Naive thymus-derived CD4-positive, alpha-beta T cell (primary cell): ENCODE measurements at regions of chr19 and their contacts with region 1.

Region 1: GRCh38 chr19:12789904-12790619 is 1.2 kb upstream of the JUNB start:
- DNase-seq: peak; percentile 80 to 97 (median 83)
- ATAC-seq: peak; percentile 48
- H3K4me3 ChIP-seq: peak overlapping the region; percentile 98
- H3K4me3 Mint-ChIP-seq: peak overlapping the region; percentile 89 to 98 (median 94)
- H3K27ac ChIP-seq: peak overlapping the region; percentile 99
- H3K27ac Mint-ChIP-seq: peak overlapping the region; percentile 97 to 100 (median 100)
- H3K4me1 ChIP-seq: peaks cover 42% of the 10 kb centered on the region in 2 donors
- H3K4me1 Mint-ChIP-seq: peaks cover 19 to 37% (median 30%) of the 10 kb centered on the region in 7 donors
- H3K27me3 ChIP-seq: no peaks in the 10 kb centered on the region
- H3K27me3 Mint-ChIP-seq: peaks cover 0 to 2% (median 0%) of the 10 kb centered on the region in 5 donors

Region 2: DNA sequence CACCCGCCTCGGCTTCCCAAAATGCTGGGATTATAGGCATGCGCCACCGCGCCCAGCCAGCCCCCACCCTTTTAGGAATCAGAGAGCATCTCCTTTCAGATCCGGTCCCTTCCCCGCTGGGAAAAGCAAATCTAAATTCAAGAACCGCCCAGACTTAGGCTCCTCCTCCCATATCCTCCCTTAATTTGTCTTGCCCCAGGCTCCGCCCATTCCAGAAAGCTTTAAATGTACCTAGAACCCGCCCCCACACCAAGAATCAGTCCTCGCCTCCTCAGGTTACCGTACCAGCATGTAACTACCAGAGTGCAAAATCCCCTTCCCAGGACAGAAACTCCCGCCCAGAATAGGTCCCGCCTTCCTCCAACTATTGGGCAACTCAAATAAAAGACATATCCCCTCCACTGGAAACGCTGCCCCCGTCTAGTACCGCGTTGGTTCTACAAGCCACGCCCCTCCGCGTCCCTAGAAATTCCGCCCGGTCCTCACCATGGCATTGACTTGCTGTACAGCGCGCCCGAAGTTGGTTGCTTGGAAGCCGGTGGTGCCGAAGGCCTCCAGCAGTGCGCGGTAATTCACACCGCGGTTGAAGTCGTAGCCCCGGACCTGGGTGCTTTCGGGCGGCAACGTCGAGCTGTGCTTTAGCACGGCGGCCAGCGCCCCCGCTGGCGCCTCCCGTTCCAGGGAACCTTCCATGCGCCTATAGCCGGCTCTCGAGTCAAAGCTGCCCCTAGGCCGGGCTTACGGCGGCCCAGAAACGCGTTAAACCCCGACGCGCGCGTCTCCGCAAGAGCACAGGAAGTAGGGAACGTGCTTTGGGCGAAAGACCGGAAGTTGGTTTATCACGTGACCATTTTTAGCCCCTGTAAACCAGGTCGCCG is 108.7 kb before region 1 on chr19 and contains the start of gene DHPS:
- CTCF ChIA-PET with region 1: interaction called, 4 read pairs
- POLR2A ChIA-PET with region 1: interaction called, 6 read pairs
- intact Hi-C with region 1: loop called in 1 of 2 experiments (anchors 2 kb)
- DNase-seq: peak; percentile 58 to 95 (median 93)
- ATAC-seq: peak; percentile 85
- H3K4me3 ChIP-seq: peak within 1 kb of the TSS; percentile 100
- H3K4me3 Mint-ChIP-seq: peak within 1 kb of the TSS; percentile 92 to 99 (median 96)
- H3K27ac ChIP-seq: peak within 1 kb of the TSS; percentile 95
- H3K27ac Mint-ChIP-seq: peak within 1 kb of the TSS; percentile 86 to 98 (median 94)
- H3K4me1 ChIP-seq: peaks cover 6 to 19% of the 10 kb centered on the region in 2 donors
- H3K4me1 Mint-ChIP-seq: peaks cover 18 to 34% (median 26%) of the 10 kb centered on the region in 7 donors
- H3K27me3 ChIP-seq: no peaks in the 10 kb centered on the region
- H3K27me3 Mint-ChIP-seq: no peaks in the 10 kb centered on the region
- total RNA-seq, gene DHPS: 125 to 223 (median 174) TPM

Region 3: GRCh38 chr19:12736995-12737834 is 52.8 kb before region 1 on chr19 and contains the start of gene GET3:
- CTCF ChIA-PET with region 1: no interaction called
- POLR2A ChIA-PET with region 1: interaction called, 23 read pairs
- intact Hi-C with region 1: loop called in 1 of 2 experiments (anchors 1 kb)
- DNase-seq: peak; percentile 53 to 92 (median 86)
- ATAC-seq: peak; percentile 85
- H3K4me3 ChIP-seq: peak within 1 kb of the TSS; percentile 76
- H3K4me3 Mint-ChIP-seq: peak within 1 kb of the TSS; percentile 96 to 100 (median 99)
- H3K27ac ChIP-seq: peak within 1 kb of the TSS; percentile 93
- H3K27ac Mint-ChIP-seq: peak within 1 kb of the TSS; percentile 90 to 99 (median 97)
- H3K4me1 ChIP-seq: peaks cover 27 to 30% of the 10 kb centered on the region in 2 donors
- H3K4me1 Mint-ChIP-seq: peaks cover 29 to 42% (median 38%) of the 10 kb centered on the region in 7 donors
- H3K27me3 ChIP-seq: no peaks in the 10 kb centered on the region
- H3K27me3 Mint-ChIP-seq: no peaks in the 10 kb centered on the region
- total RNA-seq, gene GET3: 22.6 to 60.3 (median 27.0) TPM

Region 4: DNA sequence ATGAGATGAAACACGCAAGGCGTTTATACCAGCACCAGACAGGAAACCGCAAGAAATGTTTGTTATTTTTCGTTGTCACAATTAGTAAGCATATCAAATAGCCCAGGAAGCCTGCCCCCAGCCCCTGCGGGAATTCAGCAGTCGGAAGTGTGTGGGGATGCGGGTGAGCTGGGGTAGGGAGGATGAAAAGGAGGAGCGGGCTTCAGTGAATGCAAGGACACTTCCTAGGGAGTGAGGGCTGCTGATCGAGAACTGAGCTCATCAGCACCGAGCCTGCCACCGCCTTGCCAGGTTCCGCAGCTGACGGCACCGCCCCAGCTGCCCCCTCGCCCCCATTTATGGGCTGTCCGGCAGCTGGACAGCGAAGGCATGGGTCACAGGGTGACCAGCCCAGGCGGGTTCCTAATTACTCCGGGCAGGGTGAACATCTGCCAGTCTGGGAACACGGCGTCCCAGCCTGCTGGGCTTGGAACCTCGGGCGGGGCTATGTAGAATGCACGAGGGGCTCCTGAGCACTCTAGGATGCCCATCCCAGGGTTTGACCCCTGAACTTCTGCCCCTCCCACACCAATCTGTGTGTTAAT is 40.0 kb before region 1 on chr19:
- CTCF ChIA-PET with region 1: no interaction called
- POLR2A ChIA-PET with region 1: no interaction called
- intact Hi-C with region 1: no loop called
- DNase-seq: no peak
- ATAC-seq: no peak
- H3K4me3 ChIP-seq: no peak overlapping the region
- H3K4me3 Mint-ChIP-seq: peak overlapping the region in 3 of 10 donors; percentile 2 to 48 (median 21)
- H3K27ac ChIP-seq: no peak overlapping the region
- H3K27ac Mint-ChIP-seq: no peak overlapping the region
- H3K4me1 ChIP-seq: no peaks in the 10 kb centered on the region
- H3K4me1 Mint-ChIP-seq: peaks cover 0 to 13% (median 4%) of the 10 kb centered on the region in 7 donors
- H3K27me3 ChIP-seq: no peaks in the 10 kb centered on the region
- H3K27me3 Mint-ChIP-seq: peaks cover 10 to 32% (median 21%) of the 10 kb centered on the region in 5 donors

Region 5: GRCh38 chr19:12806239-12807081 is 16.4 kb after region 1 on chr19 and contains the start of gene RNASEH2A:
- CTCF ChIA-PET with region 1: no interaction called
- POLR2A ChIA-PET with region 1: interaction called, 27 read pairs
- intact Hi-C with region 1: loop called in 1 of 2 experiments (anchors 2 kb)
- DNase-seq: peak; percentile 74 to 87 (median 84)
- ATAC-seq: peak; percentile 95
- H3K4me3 ChIP-seq: peak within 1 kb of the TSS; percentile 73
- H3K4me3 Mint-ChIP-seq: peak within 1 kb of the TSS; percentile 81 to 96 (median 91)
- H3K27ac ChIP-seq: peak within 1 kb of the TSS; percentile 70
- H3K27ac Mint-ChIP-seq: peak within 1 kb of the TSS; percentile 71 to 94 (median 89)
- H3K4me1 ChIP-seq: peaks cover 18% of the 10 kb centered on the region in 2 donors
- H3K4me1 Mint-ChIP-seq: peaks cover 15 to 26% (median 21%) of the 10 kb centered on the region in 7 donors
- H3K27me3 ChIP-seq: no peaks in the 10 kb centered on the region
- H3K27me3 Mint-ChIP-seq: peaks cover 0 to 6% (median 0%) of the 10 kb centered on the region in 5 donors
- total RNA-seq, gene RNASEH2A: 1.6 to 30.9 (median 9.3) TPM

Region 6: DNA sequence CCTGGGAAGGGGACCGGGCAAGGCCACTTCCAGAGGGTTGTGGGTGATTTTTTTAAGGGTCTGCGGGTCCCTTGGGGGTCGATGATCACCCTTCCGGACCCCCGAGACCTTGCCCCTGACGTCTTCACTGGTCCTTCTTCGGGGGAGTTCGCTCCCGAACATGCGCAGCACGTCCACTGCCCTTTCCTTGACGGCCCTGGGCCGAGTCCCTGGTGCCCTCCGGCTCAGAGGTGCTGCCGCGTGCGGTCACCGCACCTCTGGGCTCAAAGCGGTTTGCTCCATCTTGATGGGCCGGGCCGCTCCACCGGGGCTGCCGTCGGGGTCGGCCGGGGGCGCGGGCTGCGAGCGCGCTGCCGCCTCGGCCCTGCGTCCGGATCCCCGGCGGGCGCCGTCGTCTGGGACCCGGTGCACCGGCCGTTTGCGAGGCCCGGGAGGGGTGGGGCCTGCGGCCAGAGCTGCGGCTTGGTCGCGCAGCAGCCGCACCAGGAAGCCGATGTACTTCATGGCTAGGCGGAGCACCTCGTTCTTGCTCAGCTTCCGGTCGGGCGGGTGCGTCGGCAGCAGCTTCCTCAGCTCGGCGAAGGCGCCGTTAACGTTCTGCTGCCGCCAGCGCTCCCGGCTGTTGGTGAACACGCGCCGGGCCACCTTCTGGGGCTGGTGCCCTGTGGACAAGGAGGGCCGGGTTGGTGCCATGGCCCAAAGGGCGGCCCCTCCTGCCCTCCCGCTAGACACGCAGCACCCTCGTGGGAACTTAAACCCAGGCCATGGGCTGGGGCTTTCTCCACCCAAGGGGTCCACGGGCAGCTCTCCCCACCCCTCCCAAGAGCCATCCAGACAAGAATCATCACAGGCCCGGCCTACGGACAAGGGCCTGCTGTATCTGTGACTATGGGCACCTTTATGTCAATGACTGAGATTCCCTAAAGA is 309.3 kb after region 1 on chr19:
- CTCF ChIA-PET with region 1: no interaction called
- POLR2A ChIA-PET with region 1: interaction called, 5 read pairs
- intact Hi-C with region 1: loop called in 1 of 2 experiments (anchors 5 kb)
- DNase-seq: peak; percentile 67 to 85 (median 81)
- ATAC-seq: peak; percentile 66
- H3K4me3 ChIP-seq: peak overlapping the region; percentile 74
- H3K4me3 Mint-ChIP-seq: peak overlapping the region; percentile 80 to 90 (median 86)
- H3K27ac ChIP-seq: peak overlapping the region; percentile 82
- H3K27ac Mint-ChIP-seq: peak overlapping the region; percentile 88 to 99 (median 93)
- H3K4me1 ChIP-seq: peaks cover 70 to 71% of the 10 kb centered on the region in 2 donors
- H3K4me1 Mint-ChIP-seq: peaks cover 17 to 64% (median 53%) of the 10 kb centered on the region in 7 donors
- H3K27me3 ChIP-seq: peaks cover 0 to 6% of the 10 kb centered on the region in 2 donors
- H3K27me3 Mint-ChIP-seq: peaks cover 6 to 35% (median 16%) of the 10 kb centered on the region in 5 donors

Region 7: GRCh38 chr19:13277104-13277809 is 487.2 kb after region 1 on chr19:
- CTCF ChIA-PET with region 1: no interaction called
- POLR2A ChIA-PET with region 1: no interaction called
- intact Hi-C with region 1: no loop called
- DNase-seq: peak; percentile 23 to 84 (median 79)
- ATAC-seq: peak; percentile 93
- H3K4me3 ChIP-seq: peak overlapping the region; percentile 41
- H3K4me3 Mint-ChIP-seq: peak overlapping the region; percentile 39 to 75 (median 64)
- H3K27ac ChIP-seq: peak overlapping the region; percentile 60
- H3K27ac Mint-ChIP-seq: peak overlapping the region; percentile 47 to 91 (median 84)
- H3K4me1 ChIP-seq: peaks cover 7% of the 10 kb centered on the region in 2 donors
- H3K4me1 Mint-ChIP-seq: peaks cover 8 to 33% (median 18%) of the 10 kb centered on the region in 7 donors
- H3K27me3 ChIP-seq: no peaks in the 10 kb centered on the region
- H3K27me3 Mint-ChIP-seq: peaks cover 0 to 10% (median 5%) of the 10 kb centered on the region in 5 donors

Region 8: DNA sequence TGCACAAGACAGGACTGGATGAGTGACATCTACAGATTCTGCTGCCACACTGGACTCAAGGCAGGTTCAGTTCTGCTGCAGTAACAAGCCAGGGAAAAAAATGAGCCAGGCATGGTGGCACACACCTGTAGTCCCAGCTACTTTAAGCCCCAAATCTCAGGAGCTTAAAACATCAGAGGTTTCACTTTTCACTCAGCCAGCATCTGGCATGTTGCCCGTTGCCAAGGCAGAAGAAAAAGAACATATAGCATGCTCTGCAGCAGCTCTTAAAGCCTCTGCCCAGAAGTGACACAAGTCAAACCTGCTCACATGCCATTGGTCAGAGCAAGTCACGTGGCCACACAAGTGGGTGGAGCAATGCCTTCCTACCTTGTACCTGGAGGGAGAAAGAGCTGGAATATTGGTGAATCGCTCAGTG is 1576.4 kb after region 1 on chr19:
- CTCF ChIA-PET with region 1: no interaction called
- POLR2A ChIA-PET with region 1: interaction called, 4 read pairs
- intact Hi-C with region 1: loop called in 1 of 2 experiments (anchors 5 kb)
- DNase-seq: peak; percentile 76 to 96 (median 93)
- ATAC-seq: peak; percentile 68
- H3K4me3 ChIP-seq: peak overlapping the region; percentile 44
- H3K4me3 Mint-ChIP-seq: peak overlapping the region; percentile 54 to 90 (median 78)
- H3K27ac ChIP-seq: peak overlapping the region; percentile 99
- H3K27ac Mint-ChIP-seq: peak overlapping the region; percentile 93 to 100 (median 98)
- H3K4me1 ChIP-seq: peaks cover 55 to 80% of the 10 kb centered on the region in 2 donors
- H3K4me1 Mint-ChIP-seq: peaks cover 53 to 81% (median 65%) of the 10 kb centered on the region in 7 donors
- H3K27me3 ChIP-seq: no peaks in the 10 kb centered on the region
- H3K27me3 Mint-ChIP-seq: no peaks in the 10 kb centered on the region